ENCODE measurements at regions of chr16 and their contacts with region 1.

Region 1: DNA sequence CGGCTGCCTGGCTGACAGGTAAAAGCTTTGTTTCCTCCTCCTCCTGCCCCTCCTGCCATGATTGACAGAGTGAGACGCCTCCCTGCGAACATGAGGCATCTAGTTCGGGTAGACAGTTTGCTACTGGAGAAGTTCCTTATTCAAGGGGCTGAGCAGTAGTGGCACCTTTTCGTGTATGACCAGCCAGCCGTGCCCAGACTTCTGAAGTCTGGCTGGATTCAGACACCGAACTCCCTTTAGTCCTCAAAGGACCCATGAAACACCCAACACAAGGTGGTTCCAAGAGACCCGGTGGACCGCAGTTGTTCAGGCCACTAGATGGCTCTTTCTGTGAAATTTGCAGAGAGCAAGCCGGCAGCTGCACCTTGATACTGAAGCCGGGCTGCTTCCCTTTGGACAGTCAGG is 192.8 kb downstream of the XYLT1 start:
- DNase-seq: peak in 1 of 3 donors; percentile 15
- H3K4me3 ChIP-seq: no peak overlapping the region
- H3K4me3 Mint-ChIP-seq: no peak overlapping the region
- H3K27ac ChIP-seq: no peak overlapping the region
- H3K27ac Mint-ChIP-seq: no peak overlapping the region
- H3K4me1 ChIP-seq: peaks cover 24 to 39% of the 10 kb centered on the region in 2 donors
- H3K4me1 Mint-ChIP-seq: peaks cover 52% of the 10 kb centered on the region
- H3K27me3 ChIP-seq: no peaks in the 10 kb centered on the region
- H3K27me3 Mint-ChIP-seq: peaks cover 0 to 3% (median 0%) of the 10 kb centered on the region in 3 donors
- CTCF ChIP-seq: no peak

Region 2: DNA sequence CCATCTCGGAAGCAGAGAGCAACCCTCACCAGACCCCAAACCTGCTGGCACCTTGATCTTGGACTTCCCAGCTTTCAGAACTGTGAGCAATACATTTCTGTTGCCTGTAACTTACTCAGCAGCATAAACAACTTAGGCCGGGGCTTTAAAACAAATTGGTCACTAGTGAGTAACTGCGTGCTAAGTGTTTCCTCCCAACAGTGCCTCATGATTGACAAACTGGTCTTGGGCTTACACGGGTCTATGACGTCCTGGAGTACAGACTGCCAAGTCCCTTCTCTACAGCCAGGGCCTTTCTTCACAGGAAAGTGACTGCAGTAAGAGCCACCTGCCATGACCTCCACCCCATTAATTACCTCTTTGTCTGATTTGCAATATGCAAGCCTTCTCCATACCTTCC is 56.1 kb after region 1 on chr16:
- intact Hi-C with region 1: loop called in 1 of 2 experiments (anchors 10 kb)
- DNase-seq: peak; percentile 72 to 93 (median 88)
- H3K4me3 ChIP-seq: no peak overlapping the region
- H3K4me3 Mint-ChIP-seq: no peak overlapping the region
- H3K27ac ChIP-seq: peak overlapping the region in 1 of 2 donors; percentile 7
- H3K27ac Mint-ChIP-seq: peak overlapping the region; percentile 7 to 96 (median 73)
- H3K4me1 ChIP-seq: peaks cover 20 to 22% of the 10 kb centered on the region in 2 donors
- H3K4me1 Mint-ChIP-seq: peaks cover 40% of the 10 kb centered on the region
- H3K27me3 ChIP-seq: no peaks in the 10 kb centered on the region
- H3K27me3 Mint-ChIP-seq: peaks cover 0 to 2% (median 1%) of the 10 kb centered on the region in 3 donors
- CTCF ChIP-seq: no peak

Region 3: DNA sequence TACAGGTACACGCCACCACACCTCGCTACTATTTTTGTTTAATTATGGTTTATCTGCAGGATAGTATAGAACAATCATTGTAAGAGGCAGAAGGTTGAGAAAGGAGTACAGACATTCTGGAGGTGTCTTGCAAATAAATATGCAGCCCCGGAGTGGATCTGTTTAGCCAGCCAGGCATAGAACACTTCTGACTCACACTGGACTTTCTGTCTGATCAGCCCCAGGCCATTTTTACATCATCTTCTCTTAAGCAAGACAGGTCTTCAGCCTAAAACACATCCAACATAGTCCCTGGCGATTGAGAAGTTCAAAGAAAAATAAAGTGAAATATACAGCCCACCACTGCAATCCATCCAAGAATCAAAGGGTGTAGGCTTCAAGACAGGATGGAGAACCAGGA is 111.4 kb after region 1 on chr16:
- intact Hi-C with region 1: loop called in 1 of 2 experiments (anchors 5 kb)
- DNase-seq: no peak
- H3K4me3 ChIP-seq: no peak overlapping the region
- H3K4me3 Mint-ChIP-seq: no peak overlapping the region
- H3K27ac ChIP-seq: no peak overlapping the region
- H3K27ac Mint-ChIP-seq: peak overlapping the region in 1 of 7 donors; percentile 11
- H3K4me1 ChIP-seq: peaks cover 4 to 9% of the 10 kb centered on the region in 2 donors
- H3K4me1 Mint-ChIP-seq: peaks cover 21% of the 10 kb centered on the region
- H3K27me3 ChIP-seq: no peaks in the 10 kb centered on the region
- H3K27me3 Mint-ChIP-seq: no peaks in the 10 kb centered on the region
- CTCF ChIP-seq: no peak